Activated B cell treated with CpG ODN at 0.5 μM for 24 hours (primary cell): ENCODE measurements at regions of chr3 and their contacts with region 1.

Region 1: GRCh38 chr3:69219101-69219708 is 96.8 kb upstream of the LMOD3 start:
- DNase-seq: no peak
- ATAC-seq: no peak
- H3K4me3 Mint-ChIP-seq: no peak overlapping the region
- H3K27ac Mint-ChIP-seq: no peak overlapping the region
- H3K4me1 Mint-ChIP-seq: no peaks in the 10 kb centered on the region
- H3K27me3 Mint-ChIP-seq: no peaks in the 10 kb centered on the region
- CTCF ChIP-seq: no peak

Region 2: GRCh38 chr3:69058180-69058946 is 160.8 kb before region 1 on chr3:
- CTCF ChIA-PET with region 1: no interaction called
- POLR2A ChIA-PET with region 1: no interaction called
- intact Hi-C with region 1: no loop called
- DNase-seq: no peak
- ATAC-seq: peak; percentile 99
- H3K4me3 Mint-ChIP-seq: peak overlapping the region; percentile 47
- H3K27ac Mint-ChIP-seq: peak overlapping the region; percentile 92
- H3K4me1 Mint-ChIP-seq: peaks cover 27% of the 10 kb centered on the region
- H3K27me3 Mint-ChIP-seq: no peaks in the 10 kb centered on the region
- CTCF ChIP-seq: no peak

Region 3: GRCh38 chr3:69149586-69149985 is 69.6 kb before region 1 on chr3:
- CTCF ChIA-PET with region 1: no interaction called
- POLR2A ChIA-PET with region 1: interaction called, 11 read pairs
- intact Hi-C with region 1: no loop called
- DNase-seq: no peak
- ATAC-seq: no peak
- H3K4me3 Mint-ChIP-seq: no peak overlapping the region
- H3K27ac Mint-ChIP-seq: no peak overlapping the region
- H3K4me1 Mint-ChIP-seq: no peaks in the 10 kb centered on the region
- H3K27me3 Mint-ChIP-seq: peaks cover 4% of the 10 kb centered on the region
- CTCF ChIP-seq: no peak

Region 4: DNA sequence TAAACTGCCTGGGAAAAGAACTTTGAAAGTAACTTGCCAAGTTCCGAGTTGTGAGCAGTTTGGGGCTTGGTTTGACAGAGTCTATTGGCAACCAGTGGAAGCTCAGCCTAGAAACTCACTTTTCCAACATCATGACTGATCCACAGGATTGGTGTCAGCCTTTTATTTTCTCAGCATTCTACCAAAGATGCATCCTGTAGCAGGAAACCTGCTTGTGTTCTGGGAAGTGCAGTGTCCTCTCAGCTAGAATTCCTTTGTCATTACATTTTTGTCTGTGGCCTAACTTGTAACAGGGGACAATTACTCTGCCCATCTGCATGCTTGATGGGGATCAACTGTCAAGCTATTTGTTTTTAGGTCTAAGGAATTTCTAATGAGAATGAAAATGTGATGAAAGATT is 19.9 kb after region 1 on chr3:
- CTCF ChIA-PET with region 1: no interaction called
- POLR2A ChIA-PET with region 1: no interaction called
- intact Hi-C with region 1: loop called (anchors 1 kb)
- DNase-seq: no peak
- ATAC-seq: no peak
- H3K4me3 Mint-ChIP-seq: no peak overlapping the region
- H3K27ac Mint-ChIP-seq: no peak overlapping the region
- H3K4me1 Mint-ChIP-seq: no peaks in the 10 kb centered on the region
- H3K27me3 Mint-ChIP-seq: no peaks in the 10 kb centered on the region
- CTCF ChIP-seq: no peak